ENCODE measurements at regions of chr2 and their contacts with region 1.

Region 1: DNA sequence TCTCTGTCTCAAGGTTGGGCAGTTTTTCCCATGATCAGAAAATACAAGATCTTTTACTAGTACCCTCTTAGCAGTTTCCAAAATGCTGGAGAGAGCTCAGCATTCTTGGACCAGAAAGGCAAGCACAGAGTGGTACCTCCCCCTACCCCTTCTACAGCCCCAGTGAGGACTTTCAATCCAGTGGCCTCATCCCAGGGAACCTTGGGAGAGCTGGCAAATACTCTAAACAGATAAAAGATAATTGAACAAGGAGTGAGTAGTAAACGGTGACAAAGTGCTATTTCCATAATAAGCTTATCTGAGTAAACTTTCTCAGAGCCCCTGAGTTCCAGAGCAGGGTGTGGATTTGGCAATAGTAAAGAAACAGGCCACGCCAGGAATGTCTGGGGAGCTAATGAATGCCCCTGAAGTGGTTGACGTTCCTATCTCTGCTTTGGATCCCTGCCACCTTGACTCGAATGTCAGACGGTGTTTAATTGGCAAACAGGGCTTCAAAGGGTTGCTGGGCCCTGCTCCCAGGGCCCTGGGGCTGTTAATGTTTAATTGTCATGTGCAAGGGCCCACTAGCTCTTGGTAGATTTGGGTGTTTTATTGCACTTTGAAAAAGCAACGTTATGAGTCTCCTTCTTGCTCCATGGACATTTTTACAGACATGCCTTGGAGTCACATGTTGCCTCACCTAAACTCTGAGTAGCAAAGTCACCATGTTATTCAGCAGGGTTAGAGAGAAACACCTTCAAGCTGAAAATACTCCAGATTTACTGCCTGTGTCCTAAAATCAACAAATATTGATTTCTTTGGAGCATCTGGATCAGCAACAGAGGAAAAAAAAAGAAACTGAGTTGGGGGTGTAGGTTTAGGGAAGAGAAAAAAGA is 239.9 kb downstream of the CYRIA start:
- DNase-seq: no peak

Region 2: DNA sequence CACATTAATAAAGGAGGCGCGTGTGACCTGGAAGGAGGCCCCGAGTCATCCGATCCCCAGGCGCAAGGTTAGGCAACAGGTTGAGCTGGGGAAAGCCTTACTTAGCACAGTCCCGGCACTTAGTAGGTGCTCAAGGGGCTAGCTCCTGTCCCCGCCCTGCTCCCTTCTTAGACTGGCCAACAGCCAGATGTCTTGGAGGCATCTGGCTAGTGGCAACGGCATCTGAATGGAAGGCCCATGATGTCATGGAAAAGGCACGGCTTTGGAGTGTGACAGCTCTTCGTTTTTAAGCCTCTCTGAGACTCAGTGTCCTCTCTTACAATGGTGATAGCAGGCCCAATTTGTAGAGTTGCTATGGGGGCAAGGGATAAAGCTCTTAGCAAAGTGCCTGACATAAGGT is 18.3 kb before region 1 on chr2:
- intact Hi-C with region 1: loop called (anchors 2 kb)
- DNase-seq: peak; percentile 83

Region 3: DNA sequence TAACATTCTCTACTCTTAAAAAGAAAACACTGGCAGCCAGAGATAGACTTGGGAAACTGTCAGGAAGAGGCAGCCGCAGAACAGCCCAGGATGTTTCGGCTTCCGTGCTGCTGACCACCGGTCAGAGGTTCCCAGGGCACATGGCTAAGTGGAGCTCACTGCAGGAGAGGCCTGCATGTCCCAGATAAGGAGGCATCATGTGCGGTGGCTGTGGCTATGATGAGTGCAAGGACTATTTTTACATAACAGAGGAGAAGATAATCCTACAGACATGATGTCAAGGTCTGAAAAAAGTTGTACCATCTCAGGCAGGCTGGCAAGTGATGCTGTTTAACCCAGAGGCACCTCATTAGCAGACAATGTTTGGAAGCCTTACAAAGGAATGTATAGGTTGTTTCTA is 12.4 kb before region 1 on chr2:
- intact Hi-C with region 1: loop called (anchors 1 kb)
- DNase-seq: peak; percentile 90

Region 4: GRCh38 chr2:16462958-16463357 is 37.3 kb after region 1 on chr2:
- intact Hi-C with region 1: no loop called
- DNase-seq: no peak

Region 5: DNA sequence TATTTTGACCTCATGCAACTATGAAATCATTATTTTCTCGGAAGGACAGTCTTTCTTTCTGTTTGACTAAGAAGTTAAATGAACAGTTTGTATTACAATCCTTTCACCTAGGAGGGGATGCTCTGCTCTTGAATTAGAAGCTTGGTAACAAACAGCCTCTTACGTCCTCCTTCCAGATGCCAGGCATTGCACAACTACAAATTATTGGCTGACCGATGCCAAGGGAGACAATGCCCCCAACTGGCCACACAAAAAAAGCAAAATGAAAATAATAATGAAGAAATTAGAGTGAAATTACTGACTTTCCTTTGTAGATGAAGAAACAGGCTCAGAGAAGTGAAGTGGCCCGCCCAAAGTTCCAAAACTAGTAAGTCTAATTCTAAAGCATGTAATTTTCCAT is 62.0 kb after region 1 on chr2:
- intact Hi-C with region 1: no loop called
- DNase-seq: no peak